ENCODE measurements at regions of chr4 and their contacts with region 1.

Region 1: GRCh38 chr4:170853422-170854021 is 763.8 kb upstream of the AADAT start:
- DNase-seq: no peak

Region 2: GRCh38 chr4:170138580-170139194 is 714.8 kb before region 1 on chr4:
- intact Hi-C with region 1: loop called (anchors 5 kb)
- DNase-seq: no peak

Region 3: GRCh38 chr4:170259631-170260153 is 593.8 kb before region 1 on chr4:
- intact Hi-C with region 1: loop called (anchors 5 kb)
- DNase-seq: no peak

Region 4: DNA sequence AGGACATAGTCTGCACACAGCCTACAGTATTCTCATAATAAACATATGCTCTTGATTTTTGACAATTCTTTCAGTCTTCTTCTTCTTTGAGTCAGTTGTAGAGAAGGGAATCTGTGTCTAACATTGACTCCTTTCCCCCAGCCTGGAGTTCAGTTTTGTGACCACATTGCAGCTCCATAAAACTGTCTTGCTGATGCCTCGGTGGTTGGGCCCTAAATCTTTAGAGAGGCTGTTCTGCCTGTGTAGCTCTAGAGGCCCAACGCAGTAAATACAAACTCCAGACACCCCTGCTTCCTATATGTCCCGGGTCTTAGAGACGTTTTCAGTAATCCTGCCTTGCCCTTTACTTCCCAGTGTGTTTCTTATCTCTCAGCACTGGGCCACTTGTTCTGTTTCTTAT is 124.3 kb before region 1 on chr4:
- intact Hi-C with region 1: no loop called
- DNase-seq: no peak

Region 5: GRCh38 chr4:170949084-170949483 is 95.6 kb after region 1 on chr4:
- intact Hi-C with region 1: no loop called
- DNase-seq: no peak

Region 6: GRCh38 chr4:171025776-171026175 is 172.3 kb after region 1 on chr4:
- intact Hi-C with region 1: no loop called
- DNase-seq: no peak